Activated T-helper 2 cell treated with anti-CD3 and anti-CD28 coated beads, Interferon-gamma antibody, Interleukin-2, Interleukin-4, amounts not matched to agents 10 μg/mL and 5 μg/mL and 100 μg/mL, durations not matched to agents 14 hours and 24 hours and 36 hours (primary cell): ENCODE measurements at regions of chr11 and their contacts with region 1.

Region 1: GRCh38 chr11:128630367-128631230 is 43.2 kb upstream of the ETS1 start:
- DNase-seq: peak; percentile 81
- H3K4me3 Mint-ChIP-seq: peak overlapping the region; percentile 28
- H3K27ac Mint-ChIP-seq: peak overlapping the region; percentile 97
- H3K4me1 Mint-ChIP-seq: peaks cover 59% of the 10 kb centered on the region
- H3K27me3 Mint-ChIP-seq: no peaks in the 10 kb centered on the region

Region 2: DNA sequence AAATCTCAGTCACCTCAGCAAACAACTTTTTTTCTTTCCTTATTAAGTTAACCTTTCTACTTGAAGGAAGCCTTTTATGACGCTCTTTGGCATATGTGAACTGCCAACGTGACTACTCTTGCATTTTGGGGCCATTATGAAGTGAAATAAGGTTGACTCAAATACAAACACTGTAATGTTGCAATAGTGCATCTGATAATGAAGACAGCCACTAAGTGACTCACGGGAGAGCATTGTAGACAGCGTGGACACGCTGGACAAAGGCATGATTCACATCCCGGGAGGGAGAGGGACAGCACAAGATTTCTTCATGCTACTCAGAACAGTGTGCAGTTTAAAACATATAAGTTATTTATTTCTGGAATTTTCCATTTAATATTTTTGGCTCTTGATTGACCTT is 604.0 kb before region 1 on chr11:
- intact Hi-C with region 1: loop called (anchors 2 kb)
- DNase-seq: no peak
- H3K4me3 Mint-ChIP-seq: no peak overlapping the region
- H3K27ac Mint-ChIP-seq: no peak overlapping the region
- H3K4me1 Mint-ChIP-seq: peaks cover 11% of the 10 kb centered on the region
- H3K27me3 Mint-ChIP-seq: peaks cover 46% of the 10 kb centered on the region

Region 3: DNA sequence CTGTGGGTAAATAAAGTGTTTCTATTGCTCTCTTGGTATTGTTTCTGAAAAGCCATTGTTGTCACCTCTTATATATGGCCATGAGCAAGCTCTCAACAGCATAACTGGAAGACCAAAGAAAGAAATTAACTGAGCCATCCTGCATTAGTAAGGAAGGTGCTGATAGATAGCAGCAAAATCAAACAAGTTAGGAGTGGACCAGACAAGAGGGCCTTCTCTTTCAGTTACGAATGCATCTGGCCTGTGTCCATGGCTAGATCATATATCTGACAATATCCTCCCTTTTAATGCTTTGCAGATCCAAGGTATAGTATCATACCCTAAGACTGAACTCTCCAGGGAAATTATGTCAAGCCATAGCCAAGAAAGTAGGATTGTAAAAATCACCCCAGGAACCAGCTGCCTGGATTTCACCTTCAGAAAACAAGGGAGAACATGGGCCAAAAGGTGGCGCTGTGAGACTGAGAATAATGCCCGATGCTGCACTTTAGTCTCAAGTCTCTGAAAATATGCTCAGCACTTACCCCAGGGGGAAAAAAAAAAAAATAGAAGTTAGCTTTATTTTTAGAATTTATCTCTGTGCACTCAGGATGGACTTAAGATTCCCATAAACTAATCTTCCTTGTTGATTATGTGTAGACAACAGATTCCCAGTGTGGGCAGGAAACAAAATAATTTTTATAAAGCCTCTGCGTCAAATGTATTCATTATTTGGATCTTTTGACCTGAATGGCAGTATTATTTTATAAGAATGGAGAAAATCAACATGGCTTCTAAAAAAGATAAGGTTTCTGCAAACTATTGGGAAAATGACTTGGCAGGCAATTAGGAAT is 458.3 kb before region 1 on chr11:
- intact Hi-C with region 1: loop called (anchors 1 kb)
- DNase-seq: peak; percentile 72
- H3K4me3 Mint-ChIP-seq: no peak overlapping the region
- H3K27ac Mint-ChIP-seq: peak overlapping the region; percentile 54
- H3K4me1 Mint-ChIP-seq: peaks cover 35% of the 10 kb centered on the region
- H3K27me3 Mint-ChIP-seq: peaks cover 6% of the 10 kb centered on the region

Region 4: DNA sequence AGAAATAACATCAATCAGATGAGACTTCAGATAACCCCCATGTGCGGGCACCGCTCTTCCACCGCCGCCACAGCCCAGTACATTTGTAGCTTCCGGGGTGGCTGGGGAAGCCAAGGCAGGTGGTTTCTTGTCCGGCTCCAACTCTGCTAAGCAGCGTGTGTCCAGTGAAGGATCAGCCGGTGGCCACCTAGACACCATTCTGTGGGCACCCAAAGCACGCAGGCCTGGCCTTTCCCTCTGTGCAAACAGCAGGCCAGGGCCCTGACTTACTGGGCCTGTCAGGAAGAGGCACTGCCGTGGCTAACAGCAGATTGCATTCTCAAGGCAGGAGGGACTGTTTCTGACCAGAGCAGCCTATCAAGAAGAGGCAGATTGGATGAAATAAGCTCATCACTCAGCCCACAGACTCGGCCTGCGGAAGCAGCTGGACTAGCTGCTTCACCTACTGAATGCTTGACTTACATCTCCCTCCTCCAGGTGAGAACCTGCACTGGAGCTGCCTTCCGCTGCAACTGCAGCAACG is 118.1 kb before region 1 on chr11:
- intact Hi-C with region 1: loop called (anchors 2 kb)
- DNase-seq: no peak
- H3K4me3 Mint-ChIP-seq: peak overlapping the region; percentile 97
- H3K27ac Mint-ChIP-seq: peak overlapping the region; percentile 90
- H3K4me1 Mint-ChIP-seq: peaks cover 94% of the 10 kb centered on the region
- H3K27me3 Mint-ChIP-seq: no peaks in the 10 kb centered on the region

Region 5: GRCh38 chr11:128831174-128832120 is 200.8 kb after region 1 on chr11:
- intact Hi-C with region 1: loop called (anchors 1 kb)
- DNase-seq: peak; percentile 75
- H3K4me3 Mint-ChIP-seq: peak overlapping the region; percentile 6
- H3K27ac Mint-ChIP-seq: peak overlapping the region; percentile 86
- H3K4me1 Mint-ChIP-seq: peaks cover 18% of the 10 kb centered on the region
- H3K27me3 Mint-ChIP-seq: peaks cover 5% of the 10 kb centered on the region